ENCODE measurements at regions of chr6 and their contacts with region 1.

Region 1: GRCh38 chr6:34757687-34758274 is 476 bp downstream of the SNRPC start:
- DNase-seq: no peak
- ATAC-seq: no peak
- H3K4me3 ChIP-seq: peak overlapping the region; percentile 87 to 99 (median 95)
- H3K4me3 Mint-ChIP-seq: no peak overlapping the region
- H3K27ac ChIP-seq: peak overlapping the region; percentile 89 to 94
- H3K27ac Mint-ChIP-seq: no peak overlapping the region
- H3K4me1 ChIP-seq: peaks cover 9 to 25% of the 10 kb centered on the region in 2 donors
- H3K4me1 Mint-ChIP-seq: peaks cover 18% of the 10 kb centered on the region
- H3K27me3 ChIP-seq: no peaks in the 10 kb centered on the region
- H3K27me3 Mint-ChIP-seq: no peaks in the 10 kb centered on the region
- CTCF ChIP-seq: no peak

Region 2: DNA sequence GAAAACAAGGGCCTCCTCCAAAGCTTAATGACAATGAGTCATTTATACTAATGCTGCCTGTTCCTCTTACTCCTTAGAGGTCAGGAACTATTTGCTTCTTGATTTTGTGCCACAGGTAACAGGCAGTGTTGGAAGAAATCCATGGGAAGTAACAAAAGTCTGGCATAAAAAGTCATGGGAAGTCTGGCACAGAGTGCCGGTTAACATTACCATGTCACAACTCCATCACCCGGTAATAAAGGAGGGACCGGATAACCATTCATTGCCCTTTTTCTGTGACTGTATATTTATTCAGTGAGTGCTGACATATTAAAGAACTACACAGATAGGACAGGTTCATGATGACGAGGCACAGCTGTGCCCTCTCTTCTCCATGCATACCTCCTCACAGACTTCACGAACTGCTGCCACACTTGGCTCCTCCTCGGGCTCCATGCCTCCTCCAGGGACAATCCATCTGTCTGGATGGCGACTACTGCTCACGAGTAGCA is 416.3 kb before region 1 on chr6:
- CTCF ChIA-PET with region 1: no interaction called
- POLR2A ChIA-PET with region 1: no interaction called
- intact Hi-C with region 1: no loop called
- DNase-seq: no peak
- ATAC-seq: no peak
- H3K4me3 ChIP-seq: no peak overlapping the region
- H3K4me3 Mint-ChIP-seq: no peak overlapping the region
- H3K27ac ChIP-seq: no peak overlapping the region
- H3K27ac Mint-ChIP-seq: peak overlapping the region; percentile 13
- H3K4me1 ChIP-seq: peaks cover 26 to 29% of the 10 kb centered on the region in 2 donors
- H3K4me1 Mint-ChIP-seq: peaks cover 64% of the 10 kb centered on the region
- H3K27me3 ChIP-seq: no peaks in the 10 kb centered on the region
- H3K27me3 Mint-ChIP-seq: no peaks in the 10 kb centered on the region
- CTCF ChIP-seq: no peak

Region 3: DNA sequence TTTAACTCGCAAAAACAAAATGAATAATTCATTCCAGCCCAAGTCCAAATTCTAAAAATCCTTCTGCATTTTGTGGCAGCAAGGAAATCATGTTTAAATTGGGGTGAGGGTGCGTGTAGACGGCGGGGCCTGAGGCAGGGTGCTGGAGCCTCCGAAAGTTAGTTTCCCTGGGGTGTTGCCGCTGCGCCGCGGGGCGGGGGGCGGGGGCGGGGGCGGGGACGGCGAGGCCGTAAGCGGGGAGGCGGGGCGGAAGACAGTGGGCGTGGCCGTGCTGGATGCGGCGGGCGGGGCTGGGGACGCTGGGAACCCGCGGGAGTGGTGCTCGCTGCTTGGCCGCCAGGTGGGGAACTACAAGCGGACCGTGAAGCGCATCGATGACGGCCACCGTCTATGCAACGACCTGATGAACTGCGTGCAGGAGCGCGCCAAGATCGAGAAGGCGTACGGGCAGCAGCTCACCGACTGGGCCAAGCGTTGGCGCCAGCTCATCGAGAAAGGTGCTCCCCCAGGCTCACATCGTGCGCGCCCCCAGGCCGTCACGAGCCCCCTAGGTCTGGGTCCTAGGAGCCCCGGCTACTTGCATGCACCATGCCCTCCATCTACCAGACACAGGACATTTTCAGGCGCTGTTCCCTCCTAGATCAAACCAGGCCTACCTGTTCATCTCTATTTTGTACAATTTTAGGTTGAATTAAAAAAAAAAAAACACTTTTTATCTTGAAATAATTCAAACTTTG is 230.6 kb before region 1 on chr6:
- CTCF ChIA-PET with region 1: no interaction called
- POLR2A ChIA-PET with region 1: no interaction called
- intact Hi-C with region 1: loop called (anchors 1 kb)
- DNase-seq: peak; percentile 96
- ATAC-seq: peak; percentile 99
- H3K4me3 ChIP-seq: peak overlapping the region in 4 of 5 experiments; percentile 11 to 44 (median 30)
- H3K4me3 Mint-ChIP-seq: peak overlapping the region; percentile 71
- H3K27ac ChIP-seq: peak overlapping the region in 1 of 2 donors; percentile 22
- H3K27ac Mint-ChIP-seq: peak overlapping the region; percentile 78
- H3K4me1 ChIP-seq: peaks cover 7 to 13% of the 10 kb centered on the region in 2 donors
- H3K4me1 Mint-ChIP-seq: peaks cover 10% of the 10 kb centered on the region
- H3K27me3 ChIP-seq: no peaks in the 10 kb centered on the region
- H3K27me3 Mint-ChIP-seq: no peaks in the 10 kb centered on the region
- CTCF ChIP-seq: peak; percentile 65

Region 4: GRCh38 chr6:34656378-34657036 is 101.3 kb before region 1 on chr6:
- CTCF ChIA-PET with region 1: interaction called, 4 read pairs
- POLR2A ChIA-PET with region 1: interaction called, 4 read pairs
- intact Hi-C with region 1: loop called (anchors 5 kb)
- DNase-seq: peak; percentile 63
- ATAC-seq: peak; percentile 71
- H3K4me3 ChIP-seq: peak overlapping the region in 3 of 5 experiments; percentile 19 to 50 (median 23)
- H3K4me3 Mint-ChIP-seq: peak overlapping the region; percentile 80
- H3K27ac ChIP-seq: peak overlapping the region; percentile 78 to 84
- H3K27ac Mint-ChIP-seq: peak overlapping the region; percentile 88
- H3K4me1 ChIP-seq: peaks cover 34 to 40% of the 10 kb centered on the region in 2 donors
- H3K4me1 Mint-ChIP-seq: peaks cover 51% of the 10 kb centered on the region
- H3K27me3 ChIP-seq: no peaks in the 10 kb centered on the region
- H3K27me3 Mint-ChIP-seq: no peaks in the 10 kb centered on the region
- CTCF ChIP-seq: no peak

Region 5: GRCh38 chr6:34696739-34697543 is 60.8 kb before region 1 on chr6 and contains the start of gene ILRUN:
- CTCF ChIA-PET with region 1: interaction called, 3 read pairs
- POLR2A ChIA-PET with region 1: no interaction called
- intact Hi-C with region 1: loop called (anchors 1 kb)
- DNase-seq: peak; percentile 99
- ATAC-seq: peak; percentile 89
- H3K4me3 ChIP-seq: peak within 1 kb of the TSS; percentile 95 to 99 (median 98)
- H3K4me3 Mint-ChIP-seq: peak within 1 kb of the TSS; percentile 96
- H3K27ac ChIP-seq: peak within 1 kb of the TSS; percentile 95 to 96
- H3K27ac Mint-ChIP-seq: peak within 1 kb of the TSS; percentile 99
- H3K4me1 ChIP-seq: peaks cover 24 to 38% of the 10 kb centered on the region in 2 donors
- H3K4me1 Mint-ChIP-seq: peaks cover 43% of the 10 kb centered on the region
- H3K27me3 ChIP-seq: no peaks in the 10 kb centered on the region
- H3K27me3 Mint-ChIP-seq: no peaks in the 10 kb centered on the region
- CTCF ChIP-seq: no peak
- total RNA-seq, gene ILRUN: 71.3 and 76.4 TPM in 2 replicates

Region 6: GRCh38 chr6:34810936-34811632 is 53.3 kb after region 1 on chr6:
- CTCF ChIA-PET with region 1: no interaction called
- POLR2A ChIA-PET with region 1: no interaction called
- intact Hi-C with region 1: no loop called
- DNase-seq: no peak
- ATAC-seq: peak; percentile 54
- H3K4me3 ChIP-seq: no peak overlapping the region
- H3K4me3 Mint-ChIP-seq: no peak overlapping the region
- H3K27ac ChIP-seq: no peak overlapping the region
- H3K27ac Mint-ChIP-seq: no peak overlapping the region
- H3K4me1 ChIP-seq: no peaks in the 10 kb centered on the region
- H3K4me1 Mint-ChIP-seq: peaks cover 19% of the 10 kb centered on the region
- H3K27me3 ChIP-seq: no peaks in the 10 kb centered on the region
- H3K27me3 Mint-ChIP-seq: no peaks in the 10 kb centered on the region
- CTCF ChIP-seq: no peak

Region 7: GRCh38 chr6:34887753-34888513 is 130.2 kb after region 1 on chr6 and contains the start of gene TAF11:
- CTCF ChIA-PET with region 1: interaction called, 5 read pairs
- POLR2A ChIA-PET with region 1: no interaction called
- intact Hi-C with region 1: loop called (anchors 1 kb)
- DNase-seq: peak; percentile 93
- ATAC-seq: peak; percentile 71
- H3K4me3 ChIP-seq: peak within 1 kb of the TSS; percentile 61 to 99 (median 80)
- H3K4me3 Mint-ChIP-seq: peak within 1 kb of the TSS; percentile 99
- H3K27ac ChIP-seq: peak within 1 kb of the TSS; percentile 76 to 92
- H3K27ac Mint-ChIP-seq: peak within 1 kb of the TSS; percentile 92
- H3K4me1 ChIP-seq: peaks cover 21 to 28% of the 10 kb centered on the region in 2 donors
- H3K4me1 Mint-ChIP-seq: peaks cover 46% of the 10 kb centered on the region
- H3K27me3 ChIP-seq: no peaks in the 10 kb centered on the region
- H3K27me3 Mint-ChIP-seq: no peaks in the 10 kb centered on the region
- CTCF ChIP-seq: no peak
- total RNA-seq, gene TAF11: 28.5 and 32.5 TPM in 2 replicates

Region 8: GRCh38 chr6:35259194-35259947 is 501.6 kb after region 1 on chr6 and contains the start of gene ZNF76:
- CTCF ChIA-PET with region 1: no interaction called
- POLR2A ChIA-PET with region 1: no interaction called
- intact Hi-C with region 1: loop called (anchors 2 kb)
- DNase-seq: peak; percentile 97
- ATAC-seq: peak; percentile 81
- H3K4me3 ChIP-seq: peak within 1 kb of the TSS; percentile 63 to 90 (median 81)
- H3K4me3 Mint-ChIP-seq: peak within 1 kb of the TSS; percentile 99
- H3K27ac ChIP-seq: peak within 1 kb of the TSS; percentile 97 to 98
- H3K27ac Mint-ChIP-seq: peak within 1 kb of the TSS; percentile 98
- H3K4me1 ChIP-seq: peaks cover 21 to 30% of the 10 kb centered on the region in 2 donors
- H3K4me1 Mint-ChIP-seq: peaks cover 47% of the 10 kb centered on the region
- H3K27me3 ChIP-seq: no peaks in the 10 kb centered on the region
- H3K27me3 Mint-ChIP-seq: no peaks in the 10 kb centered on the region
- CTCF ChIP-seq: no peak
- total RNA-seq, gene ZNF76: 96.9 and 107 TPM in 2 replicates

Measured in B cell (primary cell).